B cell (primary cell): ENCODE measurements at regions of chr2 and their contacts with region 1.

Region 1: DNA sequence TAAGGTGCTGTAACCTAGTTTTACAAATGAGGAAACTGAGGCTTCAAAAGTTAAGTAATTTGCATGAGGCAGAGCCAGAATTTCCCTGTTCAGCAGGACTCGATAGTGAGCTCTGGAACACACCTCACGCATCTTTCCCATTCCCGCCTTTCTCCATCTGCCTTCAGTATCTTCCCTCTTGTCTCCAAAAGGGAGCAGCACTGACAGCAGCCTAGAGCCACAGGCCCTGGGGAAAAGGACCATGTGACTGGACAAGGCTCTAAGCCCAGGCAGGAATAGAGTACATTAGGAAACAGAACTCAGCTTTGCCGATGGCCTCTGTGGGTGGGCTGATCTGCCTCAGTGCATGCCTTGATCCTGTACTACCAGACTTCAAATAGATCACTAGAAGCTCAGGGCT is 21.5 kb downstream of the GPR155 start:
- DNase-seq: no peak
- ATAC-seq: no peak
- H3K4me3 ChIP-seq: no peak overlapping the region
- H3K4me3 Mint-ChIP-seq: no peak overlapping the region
- H3K27ac ChIP-seq: no peak overlapping the region
- H3K27ac Mint-ChIP-seq: no peak overlapping the region
- H3K4me1 ChIP-seq: no peaks in the 10 kb centered on the region
- H3K4me1 Mint-ChIP-seq: no peaks in the 10 kb centered on the region
- H3K27me3 ChIP-seq: no peaks in the 10 kb centered on the region
- H3K27me3 Mint-ChIP-seq: no peaks in the 10 kb centered on the region
- CTCF ChIP-seq: no peak

Region 2: DNA sequence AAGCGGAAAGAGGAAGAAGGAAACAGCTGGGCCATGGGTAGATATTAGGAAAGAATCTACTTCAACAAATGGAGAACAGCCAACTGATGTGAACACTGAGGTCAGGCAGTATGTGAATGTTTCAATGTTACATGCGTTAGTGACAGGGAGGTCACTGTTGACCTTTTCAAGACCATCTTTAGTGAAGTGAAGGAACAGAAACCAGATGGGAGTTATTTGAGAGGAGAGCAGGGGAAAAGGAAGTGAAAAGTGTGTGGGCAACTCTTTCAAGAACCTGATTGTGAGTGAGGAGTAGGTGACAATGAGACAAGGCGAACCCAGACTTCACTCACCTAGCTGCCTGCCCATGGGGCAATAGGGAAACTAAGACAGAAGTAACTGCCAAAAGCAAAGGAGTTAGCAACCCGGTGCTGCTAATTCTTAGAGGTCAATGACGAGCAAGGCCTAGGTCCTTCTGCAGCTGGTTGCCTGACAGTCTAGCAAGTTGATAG is 567.1 kb before region 1 on chr2:
- CTCF ChIA-PET with region 1: no interaction called
- POLR2A ChIA-PET with region 1: no interaction called
- intact Hi-C with region 1: no loop called
- DNase-seq: peak; percentile 56
- ATAC-seq: peak; percentile 88
- H3K4me3 ChIP-seq: no peak overlapping the region
- H3K4me3 Mint-ChIP-seq: peak overlapping the region; percentile 35
- H3K27ac ChIP-seq: peak overlapping the region in 1 of 2 donors; percentile 39
- H3K27ac Mint-ChIP-seq: peak overlapping the region; percentile 54
- H3K4me1 ChIP-seq: peaks cover 15 to 23% of the 10 kb centered on the region in 2 donors
- H3K4me1 Mint-ChIP-seq: peaks cover 32% of the 10 kb centered on the region
- H3K27me3 ChIP-seq: no peaks in the 10 kb centered on the region
- H3K27me3 Mint-ChIP-seq: no peaks in the 10 kb centered on the region
- CTCF ChIP-seq: no peak

Region 3: DNA sequence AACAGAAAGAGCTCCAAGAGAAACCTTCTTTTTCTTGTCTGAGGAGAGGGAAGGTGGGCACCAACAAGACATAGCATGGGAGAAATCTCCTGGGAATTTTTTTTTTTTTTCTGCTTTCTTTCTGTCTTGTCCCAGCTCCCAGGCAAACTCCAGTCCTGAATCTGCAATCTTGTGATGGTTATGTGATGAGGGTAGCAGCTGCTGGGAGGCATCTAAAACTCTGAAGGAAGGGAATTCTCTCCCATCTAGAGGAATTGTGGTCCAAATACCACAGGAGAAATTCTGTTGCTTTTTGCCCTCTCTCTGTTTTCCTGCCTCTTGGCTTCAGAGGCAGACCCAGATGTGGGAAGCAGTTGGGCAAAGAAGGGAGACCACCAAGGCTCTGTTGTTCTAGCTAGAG is 53.1 kb before region 1 on chr2:
- CTCF ChIA-PET with region 1: no interaction called
- POLR2A ChIA-PET with region 1: no interaction called
- intact Hi-C with region 1: no loop called
- DNase-seq: no peak
- ATAC-seq: no peak
- H3K4me3 ChIP-seq: no peak overlapping the region
- H3K4me3 Mint-ChIP-seq: no peak overlapping the region
- H3K27ac ChIP-seq: no peak overlapping the region
- H3K27ac Mint-ChIP-seq: no peak overlapping the region
- H3K4me1 ChIP-seq: peaks cover 0 to 3% of the 10 kb centered on the region in 2 donors
- H3K4me1 Mint-ChIP-seq: no peaks in the 10 kb centered on the region
- H3K27me3 ChIP-seq: no peaks in the 10 kb centered on the region
- H3K27me3 Mint-ChIP-seq: no peaks in the 10 kb centered on the region
- CTCF ChIP-seq: no peak

Region 4: DNA sequence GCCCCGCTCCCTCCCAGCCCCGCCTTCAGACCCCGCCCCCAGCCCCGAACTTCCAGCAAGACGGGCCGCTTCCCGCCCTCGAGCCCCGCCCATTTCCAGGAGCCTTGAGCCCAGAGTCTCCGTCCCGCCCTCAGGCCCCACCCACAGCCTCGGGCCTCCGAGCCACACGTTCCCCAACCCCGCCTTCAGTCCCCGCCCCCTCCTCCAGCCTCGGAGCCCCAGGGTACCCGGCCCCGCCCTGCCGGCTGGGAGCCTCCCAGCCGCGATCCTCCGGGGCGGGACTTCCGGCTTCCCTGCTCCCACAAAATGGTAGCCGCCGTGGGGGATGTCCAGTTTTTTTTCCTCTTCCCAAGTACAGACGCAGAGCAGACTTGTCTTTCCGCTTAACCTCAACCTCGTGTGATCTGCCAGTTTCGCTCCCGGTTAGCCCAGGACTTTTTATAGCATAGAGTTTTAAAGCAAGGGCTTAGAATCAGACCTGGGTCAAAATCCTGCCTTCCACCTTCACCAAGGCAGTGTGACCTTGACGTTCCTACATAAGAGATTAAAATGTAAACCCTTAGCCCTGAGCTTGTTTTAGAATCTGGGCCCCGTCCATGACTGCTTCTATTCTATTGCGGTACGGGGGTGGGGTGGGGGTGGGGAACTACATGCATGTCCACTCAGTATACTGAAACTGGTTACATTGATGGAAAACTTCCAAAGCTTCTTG is 21.9 kb after region 1 on chr2:
- CTCF ChIA-PET with region 1: interaction called, 53 read pairs
- POLR2A ChIA-PET with region 1: no interaction called
- intact Hi-C with region 1: loop called (anchors 1 kb)
- DNase-seq: peak; percentile 95
- ATAC-seq: peak; percentile 93
- H3K4me3 ChIP-seq: peak overlapping the region; percentile 81 to 90 (median 87)
- H3K4me3 Mint-ChIP-seq: peak overlapping the region; percentile 98
- H3K27ac ChIP-seq: peak overlapping the region; percentile 74 to 75
- H3K27ac Mint-ChIP-seq: peak overlapping the region; percentile 88
- H3K4me1 ChIP-seq: peaks cover 17 to 27% of the 10 kb centered on the region in 2 donors
- H3K4me1 Mint-ChIP-seq: peaks cover 44% of the 10 kb centered on the region
- H3K27me3 ChIP-seq: no peaks in the 10 kb centered on the region
- H3K27me3 Mint-ChIP-seq: no peaks in the 10 kb centered on the region
- CTCF ChIP-seq: no peak

Region 5: GRCh38 chr2:174522553-174522952 is 57.2 kb after region 1 on chr2:
- CTCF ChIA-PET with region 1: interaction called, 131 read pairs
- POLR2A ChIA-PET with region 1: no interaction called
- intact Hi-C with region 1: loop called (anchors 1 kb)
- DNase-seq: peak; percentile 31
- ATAC-seq: peak; percentile 36
- H3K4me3 ChIP-seq: no peak overlapping the region
- H3K4me3 Mint-ChIP-seq: no peak overlapping the region
- H3K27ac ChIP-seq: no peak overlapping the region
- H3K27ac Mint-ChIP-seq: peak overlapping the region; percentile 23
- H3K4me1 ChIP-seq: peaks cover 3 to 6% of the 10 kb centered on the region in 2 donors
- H3K4me1 Mint-ChIP-seq: peaks cover 18% of the 10 kb centered on the region
- H3K27me3 ChIP-seq: peaks cover 0 to 2% (median 0%) of the 10 kb centered on the region in 4 experiments
- H3K27me3 Mint-ChIP-seq: peaks cover 6% of the 10 kb centered on the region
- CTCF ChIP-seq: no peak

Region 6: DNA sequence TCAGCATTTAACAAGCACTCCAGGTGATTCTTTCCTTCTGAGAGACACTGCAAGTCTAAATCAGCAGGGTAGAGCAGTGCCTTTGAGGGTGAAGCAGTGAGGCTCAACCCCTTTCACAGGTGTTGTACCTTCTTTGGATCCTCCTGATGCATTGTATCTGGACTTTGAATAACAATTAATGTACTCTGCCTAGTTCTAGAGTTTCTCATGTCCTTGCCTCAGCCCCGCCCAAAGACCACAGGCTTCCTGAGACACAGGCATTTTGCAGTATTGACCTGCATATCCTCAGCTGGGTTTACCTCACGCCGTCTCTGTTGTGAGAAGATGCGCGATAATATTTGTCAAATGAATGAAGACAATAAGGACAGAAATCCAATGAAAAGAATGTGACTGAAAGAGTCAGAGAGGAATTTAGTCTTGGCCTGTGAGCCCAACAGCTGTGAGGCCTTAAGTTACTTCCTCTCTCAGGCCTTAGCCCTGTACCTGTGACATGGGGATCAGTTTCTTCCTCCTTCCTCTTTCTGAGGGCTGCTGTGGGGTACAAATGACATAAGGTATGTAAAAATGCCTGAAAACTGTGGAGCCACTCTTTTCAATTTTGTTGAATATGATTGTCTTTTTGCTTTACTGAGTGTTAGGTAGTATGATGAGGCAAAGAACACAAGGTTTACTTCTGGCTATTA is 88.6 kb after region 1 on chr2:
- CTCF ChIA-PET with region 1: interaction called, 50 read pairs
- POLR2A ChIA-PET with region 1: no interaction called
- intact Hi-C with region 1: no loop called
- DNase-seq: peak; percentile 75
- ATAC-seq: peak; percentile 89
- H3K4me3 ChIP-seq: no peak overlapping the region
- H3K4me3 Mint-ChIP-seq: peak overlapping the region; percentile 75
- H3K27ac ChIP-seq: peak overlapping the region; percentile 70 to 77
- H3K27ac Mint-ChIP-seq: peak overlapping the region; percentile 92
- H3K4me1 ChIP-seq: peaks cover 33 to 36% of the 10 kb centered on the region in 2 donors
- H3K4me1 Mint-ChIP-seq: peaks cover 38% of the 10 kb centered on the region
- H3K27me3 ChIP-seq: no peaks in the 10 kb centered on the region
- H3K27me3 Mint-ChIP-seq: no peaks in the 10 kb centered on the region
- CTCF ChIP-seq: no peak

Region 7: GRCh38 chr2:174593574-174594203 is 128.4 kb after region 1 on chr2:
- CTCF ChIA-PET with region 1: interaction called, 12 read pairs
- POLR2A ChIA-PET with region 1: no interaction called
- intact Hi-C with region 1: no loop called
- DNase-seq: peak; percentile 88
- ATAC-seq: peak; percentile 66
- H3K4me3 ChIP-seq: peak overlapping the region; percentile 53 to 92 (median 71)
- H3K4me3 Mint-ChIP-seq: peak overlapping the region; percentile 93
- H3K27ac ChIP-seq: peak overlapping the region; percentile 93 to 98
- H3K27ac Mint-ChIP-seq: peak overlapping the region; percentile 96
- H3K4me1 ChIP-seq: peaks cover 63 to 65% of the 10 kb centered on the region in 2 donors
- H3K4me1 Mint-ChIP-seq: peaks cover 65% of the 10 kb centered on the region
- H3K27me3 ChIP-seq: no peaks in the 10 kb centered on the region
- H3K27me3 Mint-ChIP-seq: no peaks in the 10 kb centered on the region
- CTCF ChIP-seq: no peak

Region 8: DNA sequence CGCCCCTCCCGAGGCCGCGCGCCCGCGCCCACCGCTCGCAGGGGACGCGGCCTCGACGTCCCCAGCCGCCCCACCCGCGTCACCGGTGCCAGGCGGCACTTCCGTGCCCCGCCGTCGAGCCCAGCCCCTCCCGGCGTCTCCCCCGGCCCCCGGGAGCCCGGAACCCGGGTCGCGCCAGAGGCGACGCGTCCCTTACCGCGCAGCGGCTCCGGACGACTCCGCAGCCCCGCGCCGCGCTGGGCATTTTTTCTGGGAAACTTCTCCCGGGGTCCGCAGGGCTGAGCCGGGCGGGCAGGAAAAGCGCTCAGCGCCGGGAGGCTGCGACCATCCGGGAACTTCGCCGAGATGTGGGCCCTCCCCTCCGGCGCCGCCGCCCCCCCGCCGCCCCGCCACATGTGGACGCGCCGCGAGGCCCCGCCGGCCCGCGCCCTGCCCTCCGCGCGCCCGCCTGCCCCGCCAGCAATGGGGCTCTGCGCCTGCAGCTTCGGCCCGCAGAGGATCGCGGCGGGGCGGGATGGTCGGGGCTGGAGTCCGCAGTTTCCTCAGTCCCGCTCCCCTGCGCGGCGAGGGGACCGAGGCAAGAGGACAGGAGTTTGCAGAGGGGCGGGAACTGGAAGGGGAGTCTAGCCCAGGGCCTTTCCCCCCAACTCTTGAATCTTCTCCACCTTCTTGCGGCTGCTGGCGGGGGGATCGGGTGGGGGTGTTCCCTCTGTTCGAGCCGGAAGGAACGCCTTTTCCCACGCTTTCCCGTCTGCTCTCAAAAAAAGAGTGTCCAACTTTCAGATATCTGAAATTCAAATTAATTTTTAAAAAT is 217.5 kb after region 1 on chr2:
- CTCF ChIA-PET with region 1: interaction called, 194 read pairs
- POLR2A ChIA-PET with region 1: no interaction called
- intact Hi-C with region 1: no loop called
- DNase-seq: peak; percentile 72
- ATAC-seq: peak; percentile 70
- H3K4me3 ChIP-seq: peak overlapping the region; percentile 67 to 87 (median 72)
- H3K4me3 Mint-ChIP-seq: peak overlapping the region; percentile 93
- H3K27ac ChIP-seq: peak overlapping the region in 1 of 2 donors; percentile 67
- H3K27ac Mint-ChIP-seq: peak overlapping the region; percentile 86
- H3K4me1 ChIP-seq: peaks cover 8 to 14% of the 10 kb centered on the region in 2 donors
- H3K4me1 Mint-ChIP-seq: peaks cover 21% of the 10 kb centered on the region
- H3K27me3 ChIP-seq: no peaks in the 10 kb centered on the region
- H3K27me3 Mint-ChIP-seq: no peaks in the 10 kb centered on the region
- CTCF ChIP-seq: no peak